Ovary (tissue), 10 donors: ENCODE measurements at regions of chr16 and their contacts with region 1.

Region 1: DNA sequence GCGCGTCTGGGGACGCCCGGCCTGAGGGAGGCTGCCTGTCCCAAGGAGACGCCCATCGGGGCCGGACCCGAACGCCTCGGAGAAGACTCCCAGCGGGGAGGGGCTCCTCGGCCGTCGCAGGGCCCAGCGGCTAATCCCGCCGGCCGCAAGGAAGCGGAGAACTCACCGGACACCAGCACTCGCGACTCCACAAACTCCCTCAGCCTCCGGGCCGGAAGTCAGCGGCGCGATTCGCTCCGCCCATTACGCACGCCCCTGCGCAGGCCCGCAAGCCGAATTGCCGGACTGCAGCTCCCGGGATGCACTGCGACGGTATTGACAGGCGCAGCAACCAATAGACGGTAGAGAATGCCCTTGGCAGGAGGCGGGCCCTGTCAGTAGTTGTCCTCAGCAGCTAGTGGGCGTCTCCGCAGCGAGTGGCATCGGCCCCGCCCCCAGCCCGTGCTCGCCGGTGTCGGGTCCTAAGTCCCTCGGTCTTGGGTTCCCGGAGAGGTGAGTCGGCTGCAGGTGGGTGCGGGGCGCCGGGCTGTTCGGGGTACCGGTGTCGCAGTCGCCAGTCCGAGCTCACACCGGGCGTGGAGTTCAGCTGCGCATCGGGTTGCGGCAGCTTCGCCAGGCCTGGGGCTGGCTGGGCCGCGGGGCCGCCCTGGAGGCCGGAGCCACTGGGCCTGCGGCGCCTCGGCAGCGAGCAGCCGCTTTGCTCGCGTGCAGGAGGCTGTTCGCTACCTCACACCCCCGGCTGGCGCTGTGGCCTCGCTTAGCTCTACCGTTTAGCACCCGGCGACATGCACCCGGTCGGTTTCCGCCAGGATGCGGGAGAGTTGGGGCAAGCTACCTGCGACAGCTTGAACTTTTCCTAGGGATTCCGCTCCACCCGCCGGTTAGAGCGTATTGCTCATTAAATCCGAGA is at the starts of genes ZNF174 and ZSCAN32:
- DNase-seq: peak; percentile 98 to 99 (median 98)
- H3K4me3 ChIP-seq: peak within 1 kb of the TSS; percentile 65
- H3K27ac ChIP-seq: peak within 1 kb of the TSS in 1 of 2 donors; percentile 62
- H3K4me1 ChIP-seq: peaks cover 7% of the 10 kb centered on the region
- H3K27me3 ChIP-seq: no peaks in the 10 kb centered on the region
- CTCF ChIP-seq: peak in 1 of 3 donors; percentile 23
- EP300 ChIP-seq: no peak
- POLR2A ChIP-seq: peak; percentile 30
- total RNA-seq, gene ZNF174: 10.5 to 17.4 (median 15.1) TPM
- total RNA-seq, gene ZSCAN32: 8.0 to 11.9 (median 8.9) TPM

Region 2: GRCh38 chr16:3282730-3283524 is 118.1 kb before region 1 on chr16 and contains the start of gene ZNF263:
- intact Hi-C with region 1: loop called in 1 of 4 experiments (anchors 10 kb)
- DNase-seq: peak; percentile 94 to 97 (median 95)
- H3K4me3 ChIP-seq: peak within 1 kb of the TSS; percentile 97
- H3K27ac ChIP-seq: peak within 1 kb of the TSS; percentile 92 to 100
- H3K4me1 ChIP-seq: peaks cover 8% of the 10 kb centered on the region
- H3K27me3 ChIP-seq: no peaks in the 10 kb centered on the region
- CTCF ChIP-seq: no peak
- EP300 ChIP-seq: peak; percentile 41
- POLR2A ChIP-seq: peak; percentile 78
- total RNA-seq, gene ZNF263: 32.1 to 46.1 (median 35.8) TPM

Region 3: GRCh38 chr16:3346041-3346440 is 55.0 kb before region 1 on chr16:
- intact Hi-C with region 1: no loop called
- DNase-seq: no peak
- H3K4me3 ChIP-seq: no peak overlapping the region
- H3K27ac ChIP-seq: no peak overlapping the region
- H3K4me1 ChIP-seq: no peaks in the 10 kb centered on the region
- H3K27me3 ChIP-seq: no peaks in the 10 kb centered on the region
- CTCF ChIP-seq: no peak
- EP300 ChIP-seq: no peak
- POLR2A ChIP-seq: no peak

Region 4: DNA sequence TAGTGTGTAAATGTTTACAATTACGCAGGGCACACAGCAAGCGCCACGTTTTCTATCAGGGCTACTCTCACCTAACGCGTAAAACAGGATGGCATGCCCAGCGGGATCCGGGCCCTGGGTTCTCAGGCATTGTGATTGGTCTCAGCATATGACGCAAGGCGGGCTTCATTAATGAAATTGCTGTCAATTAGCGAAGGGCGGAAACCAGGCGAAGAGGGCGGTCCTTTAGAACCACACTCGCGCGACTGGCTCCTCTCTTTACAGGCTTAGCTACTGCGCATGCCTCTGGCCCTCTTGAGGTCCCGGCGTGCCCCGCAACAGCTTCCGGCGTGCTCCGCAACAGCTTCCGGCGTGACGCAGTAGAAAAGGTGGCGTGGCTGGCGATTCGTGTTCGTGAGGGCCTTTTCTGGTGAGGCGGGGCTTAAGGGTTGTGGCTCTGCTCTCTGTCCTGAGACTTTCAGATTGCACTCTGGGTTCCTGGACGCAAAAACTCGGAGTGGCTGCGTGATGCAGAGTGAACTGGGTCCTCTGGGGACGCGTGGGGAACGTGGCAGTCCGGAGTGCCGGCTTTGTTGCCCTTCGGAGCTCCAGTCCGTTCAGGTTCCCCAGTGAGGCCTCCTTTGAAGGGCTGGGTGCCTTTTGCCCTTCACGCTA is 36.1 kb before region 1 on chr16:
- intact Hi-C with region 1: no loop called
- DNase-seq: peak; percentile 90 to 93 (median 90)
- H3K4me3 ChIP-seq: peak overlapping the region; percentile 38
- H3K27ac ChIP-seq: peak overlapping the region in 1 of 2 donors; percentile 91
- H3K4me1 ChIP-seq: no peaks in the 10 kb centered on the region
- H3K27me3 ChIP-seq: no peaks in the 10 kb centered on the region
- CTCF ChIP-seq: peak in 1 of 3 donors; percentile 8
- EP300 ChIP-seq: no peak
- POLR2A ChIP-seq: peak; percentile 59

Region 5: GRCh38 chr16:3389663-3390338 is 11.2 kb before region 1 on chr16:
- intact Hi-C with region 1: loop called in 1 of 4 experiments (anchors 2 kb)
- DNase-seq: no peak
- H3K4me3 ChIP-seq: no peak overlapping the region
- H3K27ac ChIP-seq: no peak overlapping the region
- H3K4me1 ChIP-seq: no peaks in the 10 kb centered on the region
- H3K27me3 ChIP-seq: no peaks in the 10 kb centered on the region
- CTCF ChIP-seq: no peak
- EP300 ChIP-seq: no peak
- POLR2A ChIP-seq: no peak

Region 6: GRCh38 chr16:3439637-3440036 is 38.6 kb after region 1 on chr16:
- intact Hi-C with region 1: loop called in 1 of 4 experiments (anchors 5 kb)
- DNase-seq: no peak
- H3K4me3 ChIP-seq: no peak overlapping the region
- H3K27ac ChIP-seq: no peak overlapping the region
- H3K4me1 ChIP-seq: peaks cover 4% of the 10 kb centered on the region
- H3K27me3 ChIP-seq: no peaks in the 10 kb centered on the region
- CTCF ChIP-seq: no peak
- EP300 ChIP-seq: no peak
- POLR2A ChIP-seq: no peak

Region 7: GRCh38 chr16:3490911-3491629 is 90.0 kb after region 1 on chr16:
- intact Hi-C with region 1: no loop called
- DNase-seq: no peak
- H3K4me3 ChIP-seq: no peak overlapping the region
- H3K27ac ChIP-seq: no peak overlapping the region
- H3K4me1 ChIP-seq: no peaks in the 10 kb centered on the region
- H3K27me3 ChIP-seq: no peaks in the 10 kb centered on the region
- CTCF ChIP-seq: no peak
- EP300 ChIP-seq: no peak
- POLR2A ChIP-seq: no peak

Region 8: DNA sequence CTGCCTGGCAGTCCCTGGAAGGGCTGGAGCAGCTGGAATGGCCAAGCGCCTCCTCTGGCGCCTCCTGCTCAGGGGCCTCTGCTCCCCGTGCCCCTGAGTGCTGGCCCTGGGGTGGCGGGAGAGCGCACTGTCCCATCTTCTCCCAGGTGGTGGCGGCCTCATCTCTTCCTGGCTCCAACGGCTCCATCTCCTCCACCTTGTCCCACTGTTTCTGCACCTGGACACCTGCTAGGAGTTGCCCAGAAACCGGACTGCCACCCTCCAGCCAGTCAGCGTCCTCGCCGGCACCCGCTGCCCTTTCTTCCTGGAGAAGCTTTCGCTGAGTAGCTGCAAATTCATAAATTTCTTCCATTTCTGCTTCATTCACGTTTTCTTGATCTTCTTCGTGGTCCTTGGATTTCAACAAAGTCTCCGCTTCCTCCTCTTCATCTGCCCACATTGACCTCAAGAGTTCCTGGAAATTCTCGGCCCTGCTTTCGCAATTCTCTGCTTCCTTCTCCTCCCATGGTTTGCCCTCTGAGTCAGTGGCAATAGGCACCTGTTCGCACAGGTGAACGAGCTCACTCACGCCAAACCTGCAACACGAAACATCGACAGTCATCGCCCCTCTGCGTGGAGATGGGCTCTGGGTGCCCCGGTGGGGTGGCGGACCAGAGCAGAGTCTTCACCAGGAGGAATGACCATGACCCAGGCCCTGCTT is 189.9 kb after region 1 on chr16:
- intact Hi-C with region 1: loop called in 1 of 4 experiments (anchors 10 kb)
- DNase-seq: no peak
- H3K4me3 ChIP-seq: no peak overlapping the region
- H3K27ac ChIP-seq: no peak overlapping the region
- H3K4me1 ChIP-seq: no peaks in the 10 kb centered on the region
- H3K27me3 ChIP-seq: no peaks in the 10 kb centered on the region
- CTCF ChIP-seq: no peak
- EP300 ChIP-seq: no peak
- POLR2A ChIP-seq: no peak